Ovary (tissue), 10 donors: ENCODE measurements at regions of chr9 and their contacts with region 1.

Region 1: DNA sequence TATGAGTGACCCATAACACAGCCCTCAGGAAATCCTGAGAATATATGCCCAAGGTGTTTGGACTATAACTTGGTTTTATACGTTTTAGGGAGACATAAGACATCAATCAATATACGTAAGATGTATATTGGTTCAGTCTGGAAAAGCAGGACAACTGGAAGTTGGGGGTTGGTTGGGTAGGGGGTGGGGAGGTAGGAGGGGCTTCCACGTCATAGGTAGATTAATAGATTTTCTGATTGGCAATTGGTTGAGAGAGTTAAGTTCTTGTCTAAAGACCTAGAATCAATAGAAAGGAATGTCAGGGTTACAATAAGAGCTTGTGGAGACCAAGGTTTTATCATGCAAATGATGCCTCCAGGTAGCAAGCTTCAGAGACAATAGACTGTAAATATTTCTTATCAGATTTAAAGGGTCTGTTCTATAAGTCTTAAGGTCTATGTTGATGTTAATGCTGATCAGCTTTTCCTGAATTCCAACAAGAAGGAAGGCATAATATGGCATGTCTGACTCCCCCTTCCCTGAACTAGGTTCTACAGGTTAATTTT is 2267.7 kb upstream of the ACO1 start:
- DNase-seq: no peak
- H3K4me3 ChIP-seq: no peak overlapping the region
- H3K27ac ChIP-seq: no peak overlapping the region
- H3K4me1 ChIP-seq: no peaks in the 10 kb centered on the region
- H3K27me3 ChIP-seq: no peaks in the 10 kb centered on the region
- CTCF ChIP-seq: no peak
- EP300 ChIP-seq: no peak
- POLR2A ChIP-seq: no peak

Region 2: GRCh38 chr9:28264368-28264767 is 1852.4 kb before region 1 on chr9:
- intact Hi-C with region 1: no loop called
- DNase-seq: no peak
- H3K4me3 ChIP-seq: no peak overlapping the region
- H3K27ac ChIP-seq: no peak overlapping the region
- H3K4me1 ChIP-seq: no peaks in the 10 kb centered on the region
- H3K27me3 ChIP-seq: no peaks in the 10 kb centered on the region
- CTCF ChIP-seq: no peak
- EP300 ChIP-seq: no peak
- POLR2A ChIP-seq: no peak

Region 3: DNA sequence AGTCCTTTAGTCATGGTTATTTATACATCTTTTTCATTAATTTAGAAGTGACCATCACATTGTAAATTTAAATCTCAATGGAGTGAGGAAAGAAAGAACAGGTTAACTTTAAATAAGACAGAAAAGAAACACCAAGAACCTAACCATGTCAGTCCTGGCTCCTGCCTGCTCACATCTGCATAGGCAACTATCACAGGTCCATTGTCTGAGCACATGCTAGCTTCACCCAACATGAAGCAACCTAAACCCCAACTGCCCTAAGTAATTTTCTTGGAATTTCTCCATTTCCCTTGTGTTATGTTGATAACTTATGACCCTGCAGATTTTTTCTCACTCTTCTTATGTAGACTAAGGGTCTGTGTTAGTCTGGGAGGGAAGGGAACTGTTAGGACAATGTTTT is 61.8 kb after region 1 on chr9:
- intact Hi-C with region 1: no loop called
- DNase-seq: no peak
- H3K4me3 ChIP-seq: no peak overlapping the region
- H3K27ac ChIP-seq: no peak overlapping the region
- H3K4me1 ChIP-seq: no peaks in the 10 kb centered on the region
- H3K27me3 ChIP-seq: no peaks in the 10 kb centered on the region
- CTCF ChIP-seq: no peak
- EP300 ChIP-seq: no peak
- POLR2A ChIP-seq: no peak

Region 4: GRCh38 chr9:30201024-30201423 is 84.3 kb after region 1 on chr9:
- intact Hi-C with region 1: loop called in 1 of 4 experiments (anchors 10 kb)
- DNase-seq: no peak
- H3K4me3 ChIP-seq: no peak overlapping the region
- H3K27ac ChIP-seq: no peak overlapping the region
- H3K4me1 ChIP-seq: no peaks in the 10 kb centered on the region
- H3K27me3 ChIP-seq: no peaks in the 10 kb centered on the region
- CTCF ChIP-seq: no peak
- EP300 ChIP-seq: no peak
- POLR2A ChIP-seq: no peak